B cell (primary cell): ENCODE measurements at regions of chr15 and their contacts with region 1.

Region 1: GRCh38 chr15:41493205-41493901 is at the start of gene ITPKA:
- DNase-seq: peak; percentile 87
- ATAC-seq: peak; percentile 88
- H3K4me3 ChIP-seq: peak within 1 kb of the TSS; percentile 5 to 81 (median 67)
- H3K4me3 Mint-ChIP-seq: peak within 1 kb of the TSS; percentile 81
- H3K27ac ChIP-seq: no peak within 1 kb of the TSS
- H3K27ac Mint-ChIP-seq: peak within 1 kb of the TSS; percentile 50
- H3K4me1 ChIP-seq: peaks cover 30 to 32% of the 10 kb centered on the region in 2 donors
- H3K4me1 Mint-ChIP-seq: peaks cover 11% of the 10 kb centered on the region
- H3K27me3 ChIP-seq: peaks cover 0 to 82% (median 30%) of the 10 kb centered on the region in 4 experiments
- H3K27me3 Mint-ChIP-seq: peaks cover 40% of the 10 kb centered on the region
- CTCF ChIP-seq: no peak
- total RNA-seq, gene ITPKA: 0.22 TPM in 1 of 2 replicates, not detected in the other

Region 2: GRCh38 chr15:41483115-41483514 is 10.2 kb before region 1 on chr15:
- CTCF ChIA-PET with region 1: no interaction called
- POLR2A ChIA-PET with region 1: no interaction called
- intact Hi-C with region 1: loop called (anchors 1 kb)
- DNase-seq: peak; percentile 53
- ATAC-seq: peak; percentile 85
- H3K4me3 ChIP-seq: peak overlapping the region in 2 of 5 experiments; percentile 5 to 15
- H3K4me3 Mint-ChIP-seq: peak overlapping the region; percentile 44
- H3K27ac ChIP-seq: peak overlapping the region; percentile 27 to 53
- H3K27ac Mint-ChIP-seq: peak overlapping the region; percentile 75
- H3K4me1 ChIP-seq: peaks cover 14 to 16% of the 10 kb centered on the region in 2 donors
- H3K4me1 Mint-ChIP-seq: peaks cover 16% of the 10 kb centered on the region
- H3K27me3 ChIP-seq: no peaks in the 10 kb centered on the region
- H3K27me3 Mint-ChIP-seq: peaks cover 4% of the 10 kb centered on the region
- CTCF ChIP-seq: no peak

Region 3: GRCh38 chr15:41512940-41513510 is 19.7 kb after region 1 on chr15:
- CTCF ChIA-PET with region 1: no interaction called
- POLR2A ChIA-PET with region 1: no interaction called
- intact Hi-C with region 1: loop called (anchors 2 kb)
- DNase-seq: peak; percentile 76
- ATAC-seq: peak; percentile 73
- H3K4me3 ChIP-seq: peak overlapping the region; percentile 34 to 76 (median 51)
- H3K4me3 Mint-ChIP-seq: peak overlapping the region; percentile 88
- H3K27ac ChIP-seq: no peak overlapping the region
- H3K27ac Mint-ChIP-seq: peak overlapping the region; percentile 71
- H3K4me1 ChIP-seq: peaks cover 30% of the 10 kb centered on the region in 2 donors
- H3K4me1 Mint-ChIP-seq: peaks cover 27% of the 10 kb centered on the region
- H3K27me3 ChIP-seq: peaks cover 0 to 27% (median 11%) of the 10 kb centered on the region in 4 experiments
- H3K27me3 Mint-ChIP-seq: peaks cover 6% of the 10 kb centered on the region
- CTCF ChIP-seq: no peak

Region 4: DNA sequence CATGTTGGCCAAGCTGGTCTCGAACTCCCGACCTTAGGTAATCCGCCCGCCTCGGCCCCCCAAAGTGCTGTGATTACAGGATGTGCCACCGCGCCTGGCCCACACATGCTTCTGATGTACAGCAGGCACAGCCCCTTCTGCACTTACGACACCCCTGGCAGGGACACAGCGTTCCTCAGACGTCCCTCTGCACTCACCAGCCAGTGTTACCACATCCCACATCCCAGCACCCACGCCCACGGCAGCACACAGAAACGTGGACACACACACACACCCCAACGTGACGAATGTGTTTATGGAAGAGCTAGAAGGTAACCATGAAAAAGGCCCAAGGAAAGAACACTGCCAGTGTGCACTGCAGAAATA is 51.3 kb after region 1 on chr15:
- CTCF ChIA-PET with region 1: no interaction called
- POLR2A ChIA-PET with region 1: interaction called, 3 read pairs
- intact Hi-C with region 1: loop called (anchors 1 kb)
- DNase-seq: no peak
- ATAC-seq: no peak
- H3K4me3 ChIP-seq: peak overlapping the region in 4 of 5 experiments; percentile 69 to 92 (median 84)
- H3K4me3 Mint-ChIP-seq: peak overlapping the region; percentile 97
- H3K27ac ChIP-seq: no peak overlapping the region
- H3K27ac Mint-ChIP-seq: peak overlapping the region; percentile 42
- H3K4me1 ChIP-seq: peaks cover 6 to 11% of the 10 kb centered on the region in 2 donors
- H3K4me1 Mint-ChIP-seq: peaks cover 10% of the 10 kb centered on the region
- H3K27me3 ChIP-seq: no peaks in the 10 kb centered on the region
- H3K27me3 Mint-ChIP-seq: no peaks in the 10 kb centered on the region
- CTCF ChIP-seq: no peak

Region 5: GRCh38 chr15:41756198-41756597 is 262.8 kb after region 1 on chr15:
- CTCF ChIA-PET with region 1: no interaction called
- POLR2A ChIA-PET with region 1: no interaction called
- intact Hi-C with region 1: no loop called
- DNase-seq: no peak
- ATAC-seq: no peak
- H3K4me3 ChIP-seq: no peak overlapping the region
- H3K4me3 Mint-ChIP-seq: no peak overlapping the region
- H3K27ac ChIP-seq: no peak overlapping the region
- H3K27ac Mint-ChIP-seq: no peak overlapping the region
- H3K4me1 ChIP-seq: no peaks in the 10 kb centered on the region
- H3K4me1 Mint-ChIP-seq: no peaks in the 10 kb centered on the region
- H3K27me3 ChIP-seq: no peaks in the 10 kb centered on the region
- H3K27me3 Mint-ChIP-seq: no peaks in the 10 kb centered on the region
- CTCF ChIP-seq: no peak